ENCODE measurements at regions of chr1 and their contacts with region 1.

Region 1: GRCh38 chr1:161132410-161133219 is at the start of gene DEDD:
- DNase-seq: peak; percentile 94 to 99
- ATAC-seq: peak; percentile 93 to 95
- H3K4me3 ChIP-seq: peak within 1 kb of the TSS; percentile 67
- H3K27ac ChIP-seq: peak within 1 kb of the TSS; percentile 93 to 95
- H3K4me1 ChIP-seq: peaks cover 20% of the 10 kb centered on the region
- CTCF ChIP-seq: no peak
- EP300 ChIP-seq: no peak
- POLR2A ChIP-seq: peak; percentile 35
- RAD21 ChIP-seq: no peak; a peak in 1 of 5 replicates
- polyA plus RNA-seq, gene DEDD: 35.9 and 38.4 TPM in 2 replicates

Region 2: GRCh38 chr1:160925652-160926241 is 206.9 kb before region 1 on chr1:
- CTCF ChIA-PET with region 1: no interaction called
- POLR2A ChIA-PET with region 1: no interaction called
- DNase-seq: peak; percentile 12 to 63
- ATAC-seq: peak; percentile 66 to 68; a peak in 5 of 6 replicates
- H3K4me3 ChIP-seq: no peak overlapping the region
- H3K27ac ChIP-seq: no peak overlapping the region
- H3K4me1 ChIP-seq: no peaks in the 10 kb centered on the region
- CTCF ChIP-seq: no peak
- EP300 ChIP-seq: no peak
- POLR2A ChIP-seq: no peak
- RAD21 ChIP-seq: no peak

Region 3: DNA sequence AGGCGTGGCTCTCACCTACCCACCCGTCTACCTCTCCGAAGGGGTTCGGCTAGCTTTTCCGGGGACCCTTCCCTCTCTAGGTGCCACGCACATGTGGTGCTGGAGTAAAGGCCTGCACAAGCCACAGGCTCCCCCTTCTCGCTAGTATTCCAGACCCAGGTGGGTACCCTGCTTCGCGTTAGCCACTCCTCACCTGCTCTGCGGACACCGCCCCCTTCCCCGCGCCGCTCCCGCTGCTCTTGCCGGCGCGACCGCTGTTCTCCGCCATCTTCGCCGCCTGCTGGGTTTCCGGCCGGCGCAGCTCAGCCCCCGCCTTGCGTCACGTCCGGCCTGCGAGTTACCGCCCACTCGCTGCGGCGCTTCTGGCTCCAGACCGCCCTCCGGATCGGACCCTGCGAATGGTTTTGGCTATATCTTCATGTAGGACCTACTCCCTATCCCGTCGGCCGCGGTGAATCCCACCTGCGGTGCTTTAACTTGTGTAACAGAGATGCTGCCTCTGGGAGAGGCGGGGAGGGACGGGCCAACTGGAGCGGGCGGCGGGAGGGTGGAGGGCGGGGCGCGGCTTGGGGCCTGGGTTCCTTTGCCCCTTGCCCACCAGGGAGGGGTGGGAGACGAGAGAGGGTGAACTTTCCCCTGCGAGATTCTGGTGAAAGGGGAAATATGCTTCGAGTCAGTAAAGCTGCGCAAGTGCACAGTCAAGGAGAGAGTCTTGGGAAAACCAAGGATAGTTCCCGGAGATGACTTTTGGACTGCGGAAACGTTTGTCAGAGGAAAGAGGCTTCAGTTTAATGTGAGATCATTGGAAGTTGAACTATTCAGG is 14.6 kb before region 1 on chr1 and contains the starts of genes NIT1 and PFDN2:
- CTCF ChIA-PET with region 1: interaction called, 3 read pairs
- POLR2A ChIA-PET with region 1: interaction called, 18 read pairs
- DNase-seq: peak; percentile 85 to 88
- ATAC-seq: peak; percentile 83 to 88
- H3K4me3 ChIP-seq: peak within 1 kb of the TSS; percentile 83
- H3K27ac ChIP-seq: peak within 1 kb of the TSS; percentile 87 to 97
- H3K4me1 ChIP-seq: peaks cover 55% of the 10 kb centered on the region
- CTCF ChIP-seq: no peak
- EP300 ChIP-seq: no peak
- POLR2A ChIP-seq: peak; percentile 93
- RAD21 ChIP-seq: no peak
- polyA plus RNA-seq, gene NIT1: 29.9 and 38.6 TPM in 2 replicates
- polyA plus RNA-seq, gene PFDN2: 106 and 187 TPM in 2 replicates

Region 4: DNA sequence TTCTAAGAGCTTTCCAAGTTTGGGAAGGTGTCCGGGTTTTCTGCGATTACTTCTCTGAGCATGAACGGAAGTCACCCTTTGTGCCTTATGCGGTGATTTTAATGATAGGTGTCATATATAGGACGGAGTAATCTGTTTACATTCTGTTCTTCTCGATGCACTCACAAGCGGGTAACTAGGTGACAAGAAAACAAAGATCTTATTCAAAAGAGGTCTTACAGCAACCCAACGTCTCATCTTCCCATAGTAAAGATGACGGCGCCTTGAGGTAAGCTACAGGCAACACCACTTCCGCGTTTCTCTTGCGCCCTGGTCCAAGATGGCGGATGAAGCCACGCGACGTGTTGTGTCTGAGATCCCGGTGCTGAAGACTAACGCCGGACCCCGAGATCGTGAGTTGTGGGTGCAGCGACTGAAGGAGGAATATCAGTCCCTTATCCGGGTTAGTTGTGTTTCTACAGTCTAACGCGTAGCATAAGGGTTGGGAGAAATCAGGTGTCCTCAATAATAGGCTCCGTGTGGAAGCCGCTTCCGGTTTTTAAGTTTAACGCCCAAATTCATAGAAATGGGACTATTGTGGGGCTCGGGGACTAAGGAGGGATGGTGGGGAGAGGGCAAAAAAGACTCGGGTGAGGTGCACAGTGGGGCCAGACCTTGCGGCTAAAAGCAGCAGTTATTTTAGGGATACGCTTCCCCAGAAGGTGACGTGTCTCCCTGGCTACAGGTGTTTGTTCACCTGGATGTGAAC is 21.2 kb after region 1 on chr1 and contains the start of gene UFC1:
- CTCF ChIA-PET with region 1: interaction called, 11 read pairs
- POLR2A ChIA-PET with region 1: interaction called, 30 read pairs
- DNase-seq: peak; percentile 89 to 94
- ATAC-seq: peak; percentile 93 to 96
- H3K4me3 ChIP-seq: peak within 1 kb of the TSS; percentile 57
- H3K27ac ChIP-seq: peak within 1 kb of the TSS; percentile 89 to 95
- H3K4me1 ChIP-seq: peaks cover 10% of the 10 kb centered on the region
- CTCF ChIP-seq: no peak
- EP300 ChIP-seq: no peak
- POLR2A ChIP-seq: peak; percentile 63; the same call in 1 of the 2 replicates
- RAD21 ChIP-seq: no peak
- polyA plus RNA-seq, gene UFC1: 110 and 115 TPM in 2 replicates

Region 5: DNA sequence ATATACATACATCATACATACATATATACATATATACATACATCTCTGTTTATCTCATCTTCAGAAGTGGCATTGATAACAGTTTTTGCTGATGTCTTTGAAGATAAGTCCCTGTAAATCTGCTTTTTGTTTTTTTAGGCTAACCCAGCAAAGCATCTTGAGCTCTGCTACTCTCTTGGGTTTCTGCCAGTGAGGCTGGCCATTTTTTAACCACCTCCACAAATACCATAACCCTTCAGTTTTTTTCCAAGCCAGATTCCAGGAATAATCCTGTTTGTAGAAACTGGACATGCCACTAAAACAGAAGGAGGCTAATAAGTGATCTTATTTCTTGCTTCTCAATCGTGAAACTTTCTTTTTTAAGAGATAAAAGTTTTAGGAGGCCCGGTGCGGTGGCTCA is 203.2 kb after region 1 on chr1:
- CTCF ChIA-PET with region 1: no interaction called
- POLR2A ChIA-PET with region 1: no interaction called
- DNase-seq: no peak
- ATAC-seq: no peak
- H3K4me3 ChIP-seq: no peak overlapping the region
- H3K27ac ChIP-seq: no peak overlapping the region
- H3K4me1 ChIP-seq: no peaks in the 10 kb centered on the region
- CTCF ChIP-seq: no peak
- EP300 ChIP-seq: no peak
- POLR2A ChIP-seq: no peak
- RAD21 ChIP-seq: no peak

Measured in A549 (cell line).